ENCODE measurements at regions of chr7 and their contacts with region 1.

Region 1: DNA sequence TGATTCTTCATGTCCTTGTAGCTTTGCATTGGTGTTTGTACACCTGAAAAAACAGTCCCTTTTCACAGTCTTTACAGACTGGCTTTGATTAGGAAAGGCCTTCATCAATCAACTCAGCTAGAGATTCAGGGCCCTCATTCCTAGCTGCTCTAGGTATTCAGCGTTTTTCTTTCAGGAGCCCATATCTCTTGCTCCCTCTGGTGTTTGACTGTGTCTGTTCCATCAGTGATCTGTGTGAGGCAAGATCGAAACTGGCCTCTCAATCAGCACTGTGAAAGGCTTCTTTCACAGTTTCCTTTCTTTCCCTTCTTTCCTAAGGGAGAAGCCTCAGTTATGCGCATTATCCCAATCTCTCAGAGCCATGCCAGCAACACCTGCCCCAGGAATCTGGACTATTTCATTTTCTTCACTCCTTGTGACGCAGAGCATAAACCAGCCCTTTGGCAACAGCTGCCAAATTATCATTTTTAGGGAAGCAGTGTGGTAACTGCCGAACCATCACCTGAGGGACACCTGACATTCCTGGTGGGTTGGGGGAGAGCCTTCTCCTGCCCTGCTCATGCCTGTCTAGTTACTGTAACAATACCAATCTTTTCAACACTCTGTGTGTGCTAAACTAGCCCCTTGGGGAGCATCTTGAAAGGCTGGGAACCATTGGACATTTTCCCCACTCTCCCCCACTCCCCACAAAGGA is 75.7 kb upstream of the CCDC71L start:
- DNase-seq: peak in 1 of 2 donors; percentile 26
- H3K4me3 ChIP-seq: no peak overlapping the region
- H3K27ac ChIP-seq: peak overlapping the region; percentile 13 to 62
- H3K4me1 ChIP-seq: peaks cover 0 to 28% (median 10%) of the 10 kb centered on the region in 4 donors
- H3K27me3 ChIP-seq: no peaks in the 10 kb centered on the region
- CTCF ChIP-seq: peak; percentile 60 to 75

Region 2: GRCh38 chr7:106542550-106543220 is 194.0 kb before region 1 on chr7:
- intact Hi-C with region 1: loop called (anchors 10 kb)
- DNase-seq: peak; percentile 73 to 74
- H3K4me3 ChIP-seq: no peak overlapping the region
- H3K27ac ChIP-seq: peak overlapping the region; percentile 57 to 65
- H3K4me1 ChIP-seq: peaks cover 0 to 23% (median 11%) of the 10 kb centered on the region in 4 donors
- H3K27me3 ChIP-seq: no peaks in the 10 kb centered on the region
- CTCF ChIP-seq: peak; percentile 53 to 73

Region 3: GRCh38 chr7:106568680-106569499 is 167.8 kb before region 1 on chr7:
- intact Hi-C with region 1: no loop called
- DNase-seq: peak in 1 of 2 donors; percentile 28
- H3K4me3 ChIP-seq: no peak overlapping the region
- H3K27ac ChIP-seq: no peak overlapping the region
- H3K4me1 ChIP-seq: peaks cover 0 to 13% (median 4%) of the 10 kb centered on the region in 4 donors
- H3K27me3 ChIP-seq: no peaks in the 10 kb centered on the region
- CTCF ChIP-seq: no peak

Region 4: GRCh38 chr7:106659963-106660861 is 76.4 kb before region 1 on chr7:
- intact Hi-C with region 1: loop called (anchors 5 kb)
- DNase-seq: peak; percentile 74 to 86
- H3K4me3 ChIP-seq: peak overlapping the region; percentile 66 to 97
- H3K27ac ChIP-seq: peak overlapping the region; percentile 93 to 99
- H3K4me1 ChIP-seq: peaks cover 0 to 37% (median 13%) of the 10 kb centered on the region in 4 donors
- H3K27me3 ChIP-seq: no peaks in the 10 kb centered on the region
- CTCF ChIP-seq: peak; percentile 58 to 72

Measured in tibial artery (tissue), 4 donors.